ENCODE measurements at regions of chr19 and their contacts with region 1.

Region 1: DNA sequence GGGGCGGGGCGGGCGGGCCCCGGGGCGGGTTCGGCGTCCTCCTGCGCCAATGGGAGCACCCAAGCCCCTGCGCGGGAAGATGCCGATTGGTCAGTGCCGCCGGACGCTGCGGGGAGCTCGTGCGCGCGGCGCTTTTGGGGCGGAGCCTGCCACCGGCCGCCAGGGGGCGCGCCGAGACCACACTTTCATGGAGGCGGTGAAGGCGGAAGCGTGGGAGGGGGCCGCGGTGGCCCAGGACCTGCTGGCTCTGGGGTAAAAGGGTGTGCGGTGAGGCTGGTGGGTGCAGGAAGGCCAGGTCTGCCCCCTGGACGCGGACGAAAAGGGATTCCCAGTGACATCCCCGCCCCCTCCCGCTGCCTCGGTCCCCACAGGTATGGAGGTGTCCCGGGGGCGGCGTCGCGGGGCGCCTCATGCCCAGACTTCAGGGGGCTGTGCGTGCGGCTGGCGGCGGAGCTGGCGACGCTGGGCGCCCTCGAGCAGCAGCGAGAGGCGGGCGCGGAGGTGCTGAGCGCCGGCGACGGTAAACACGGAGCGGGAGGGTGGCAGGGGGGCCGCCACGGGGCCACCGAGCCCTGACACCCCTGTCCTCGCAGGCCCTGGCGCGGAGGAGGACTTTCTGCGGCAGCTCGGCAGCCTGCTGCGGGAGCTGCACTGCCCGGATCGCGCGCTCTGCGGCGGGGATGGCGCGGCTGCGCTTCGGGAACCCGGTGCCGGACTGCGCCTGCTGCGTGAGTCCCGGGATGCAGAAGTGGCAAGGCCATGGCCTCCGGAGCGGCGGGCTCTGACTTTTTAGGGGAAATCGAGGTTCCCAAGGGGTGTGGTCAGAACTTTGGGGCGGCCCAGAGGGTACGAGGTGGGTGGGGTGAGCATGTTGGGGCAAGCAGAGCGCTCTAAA is at the start of gene FAM98C:
- ATAC-seq: peak; percentile 94 to 97 (median 96)
- H3K4me3 ChIP-seq: peak within 1 kb of the TSS; percentile 50 to 76 (median 61)
- H3K27ac ChIP-seq: peak within 1 kb of the TSS; percentile 36 to 56
- H3K4me1 ChIP-seq: peaks cover 3 to 8% of the 10 kb centered on the region in 2 donors
- total RNA-seq, gene FAM98C: 7.8 to 13.6 (median 12.2) TPM

Region 2: GRCh38 chr19:38538793-38539528 is 135.7 kb after region 1 on chr19:
- in situ Hi-C with region 1: no loop called
- ATAC-seq: no peak
- H3K4me3 ChIP-seq: no peak overlapping the region
- H3K27ac ChIP-seq: no peak overlapping the region
- H3K4me1 ChIP-seq: no peaks in the 10 kb centered on the region

Region 3: DNA sequence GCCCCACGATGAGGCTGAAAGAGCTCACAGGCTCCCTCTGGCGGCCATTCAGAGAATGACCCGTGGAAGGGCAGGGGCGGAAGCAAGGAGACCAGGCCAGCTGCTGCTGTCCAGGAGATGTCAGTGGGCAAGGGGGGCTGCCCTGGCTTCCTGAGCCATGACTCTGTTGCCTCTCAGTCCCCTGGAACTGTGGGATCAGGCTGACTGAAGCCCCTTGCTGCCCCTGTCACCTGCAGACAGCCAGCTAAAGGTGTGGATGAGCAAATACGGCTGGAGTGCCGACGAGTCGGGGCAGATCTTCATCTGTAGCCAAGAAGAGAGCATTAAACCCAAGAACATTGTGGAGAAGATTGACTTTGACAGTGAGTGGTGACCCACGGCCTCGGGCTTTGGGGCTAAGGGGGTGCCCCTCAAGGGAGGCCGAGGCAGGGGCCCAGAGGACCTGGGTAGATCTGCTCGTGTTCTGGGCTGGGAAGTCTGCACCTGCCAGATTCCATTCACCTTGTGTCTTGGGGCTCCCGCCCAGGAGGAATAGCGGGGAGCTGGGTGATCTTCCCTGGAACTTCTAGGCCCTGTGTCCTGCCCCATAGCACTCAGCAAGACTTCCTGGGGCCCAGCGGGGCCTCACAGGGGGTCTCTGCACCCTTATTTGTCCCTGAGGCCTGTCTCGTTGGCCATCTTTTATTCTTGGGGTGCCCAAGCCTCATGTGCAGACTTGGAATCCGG is 231.7 kb after region 1 on chr19:
- in situ Hi-C with region 1: loop called in 3 of 9 experiments (anchors 10 to 25 kb)
- ATAC-seq: peak; percentile 13 to 77 (median 60)
- H3K4me3 ChIP-seq: no peak overlapping the region
- H3K27ac ChIP-seq: no peak overlapping the region
- H3K4me1 ChIP-seq: no peaks in the 10 kb centered on the region

Region 4: GRCh38 chr19:38647368-38647965 is 244.3 kb after region 1 on chr19 and contains the start of gene ACTN4:
- in situ Hi-C with region 1: loop called in 2 of 9 experiments (anchors 25 kb)
- ATAC-seq: peak; percentile 76 to 91 (median 88)
- H3K4me3 ChIP-seq: peak within 1 kb of the TSS; percentile 60 to 78 (median 74)
- H3K27ac ChIP-seq: peak within 1 kb of the TSS; percentile 37 to 62
- H3K4me1 ChIP-seq: peaks cover 11 to 12% of the 10 kb centered on the region in 2 donors
- total RNA-seq, gene ACTN4: 31.6 to 251 (median 83.9) TPM

Region 5: DNA sequence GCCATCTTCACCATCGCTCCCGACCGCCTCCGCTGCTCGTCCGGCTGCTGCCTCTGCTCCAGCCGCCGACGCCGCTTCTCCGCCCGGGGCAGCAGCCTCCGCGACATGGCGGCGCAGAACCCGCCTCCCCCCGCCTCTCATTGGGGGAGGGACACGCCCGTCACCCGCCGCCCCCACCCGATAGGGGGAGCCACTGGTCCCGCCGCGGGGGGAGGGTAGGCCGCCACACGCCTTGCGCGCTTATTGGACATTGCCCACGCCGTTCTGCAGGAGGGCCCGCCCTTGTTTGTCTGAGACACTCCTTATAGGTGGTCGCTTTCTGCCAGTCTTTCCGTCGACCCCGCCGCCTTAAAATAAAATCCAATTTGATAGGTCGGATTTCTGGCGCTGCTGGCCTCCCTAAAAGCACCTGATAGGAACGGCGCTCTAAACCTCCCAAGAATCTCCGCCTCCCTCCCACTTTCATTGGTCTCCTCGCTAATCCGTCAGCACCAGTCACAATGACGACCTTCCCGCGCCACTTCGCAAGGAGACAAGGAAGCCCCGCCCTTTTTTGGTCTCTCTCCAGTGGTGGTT is 446.7 kb after region 1 on chr19 and contains the start of gene HNRNPL:
- in situ Hi-C with region 1: no loop called
- ATAC-seq: peak; percentile 58 to 78 (median 72)
- H3K4me3 ChIP-seq: peak within 1 kb of the TSS; percentile 69 to 93 (median 85)
- H3K27ac ChIP-seq: peak within 1 kb of the TSS; percentile 98 to 99
- H3K4me1 ChIP-seq: peaks cover 4 to 5% of the 10 kb centered on the region in 2 donors
- total RNA-seq, gene HNRNPL: 142 to 378 (median 198) TPM

Region 6: DNA sequence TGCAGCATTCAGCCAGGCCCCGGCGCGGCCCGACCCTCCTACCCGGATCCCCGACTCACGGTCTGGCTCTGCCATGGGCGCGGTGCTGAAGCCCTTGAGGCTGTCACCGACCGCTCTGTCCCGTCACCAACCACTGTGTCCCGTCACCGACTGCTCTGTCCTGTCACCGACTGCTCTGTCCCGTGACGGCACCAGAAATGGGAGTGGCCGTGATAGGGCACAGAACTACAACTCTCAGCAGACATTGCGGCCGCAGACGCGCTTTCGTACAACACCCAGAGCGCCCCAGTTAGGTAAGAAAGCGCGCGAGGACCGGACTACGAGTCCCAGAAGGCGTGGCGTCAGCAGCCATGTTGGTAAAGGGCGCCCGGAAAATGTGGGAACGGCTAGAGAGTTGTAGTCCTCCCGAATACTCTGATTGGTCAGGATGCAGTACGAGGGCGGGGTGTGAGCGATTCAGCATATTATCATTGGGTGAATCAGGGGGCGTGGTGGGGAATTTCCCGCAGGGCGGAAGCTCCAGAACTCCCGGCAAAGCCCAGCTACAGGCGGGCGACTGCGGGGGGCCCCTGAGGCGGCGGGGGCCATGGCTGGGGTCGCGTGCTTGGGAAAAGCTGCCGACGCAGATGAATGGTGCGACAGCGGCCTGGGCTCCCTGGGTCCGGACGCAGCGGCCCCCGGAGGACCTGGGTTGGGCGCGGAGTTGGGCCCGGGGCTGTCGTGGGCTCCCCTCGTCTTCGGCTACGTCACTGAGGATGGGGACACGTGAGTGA is 496.4 kb after region 1 on chr19 and contains the starts of genes NFKBIB and SIRT2:
- in situ Hi-C with region 1: loop called in 3 of 9 experiments (anchors 25 kb)
- ATAC-seq: peak; percentile 91 to 94 (median 92)
- H3K4me3 ChIP-seq: peak within 1 kb of the TSS; percentile 81 to 98 (median 93)
- H3K27ac ChIP-seq: peak within 1 kb of the TSS; percentile 70 to 76
- H3K4me1 ChIP-seq: peaks cover 6 to 8% of the 10 kb centered on the region in 2 donors
- total RNA-seq, gene NFKBIB: 7.1 to 26.0 (median 11.7) TPM
- total RNA-seq, gene SIRT2: 22.8 to 66.0 (median 38.1) TPM

Region 7: DNA sequence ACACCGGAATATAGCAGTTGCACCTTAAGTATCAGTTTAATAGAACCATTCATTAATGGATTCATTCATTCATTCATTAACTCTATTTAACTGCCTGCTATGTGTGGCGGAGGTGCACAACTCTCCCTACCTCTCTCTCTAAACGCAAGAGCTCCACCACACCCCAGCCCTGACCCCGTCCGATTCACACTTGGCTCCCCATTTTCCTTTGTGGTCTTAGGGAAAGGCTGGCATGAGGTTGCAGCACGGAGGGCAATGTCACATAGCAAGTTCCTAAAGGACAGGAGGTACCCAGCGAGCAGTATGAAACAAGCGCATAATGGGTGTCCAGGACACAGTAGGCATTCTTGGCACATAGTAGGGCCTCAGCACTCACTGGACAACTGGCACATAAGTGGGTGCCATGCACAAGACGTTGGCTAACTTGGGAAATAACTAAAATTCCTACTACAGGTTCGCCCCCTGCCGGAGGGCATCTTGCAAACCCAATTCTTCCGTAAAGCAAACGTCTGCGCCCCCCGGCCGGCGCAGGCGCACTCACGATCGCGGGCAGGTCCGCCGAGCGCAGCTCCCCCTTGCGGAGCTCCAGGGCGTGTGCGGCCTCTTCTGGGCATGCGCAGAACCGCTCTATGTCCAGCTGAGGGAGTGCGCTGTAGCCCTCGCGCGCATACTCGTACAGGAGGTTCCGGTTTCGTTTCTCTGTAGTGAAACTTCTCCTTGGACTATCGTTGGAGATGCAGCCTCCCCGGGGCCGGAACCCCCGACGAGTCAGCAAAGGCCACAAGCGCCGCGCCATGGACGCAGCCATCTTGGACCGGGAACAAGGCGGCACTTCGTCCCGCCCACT is 526.9 kb after region 1 on chr19 and contains the start of gene SARS2:
- in situ Hi-C with region 1: loop called in 1 of 9 experiments (anchors 25 kb)
- ATAC-seq: peak; percentile 57 to 82 (median 75)
- H3K4me3 ChIP-seq: peak within 1 kb of the TSS; percentile 51 to 80 (median 64)
- H3K27ac ChIP-seq: peak within 1 kb of the TSS; percentile 95 to 97
- H3K4me1 ChIP-seq: peaks cover 2 to 7% of the 10 kb centered on the region in 2 donors
- total RNA-seq, gene SARS2: 8.4 to 53.6 (median 19.1) TPM